Left cardiac atrium (tissue), 4 donors: ENCODE measurements at regions of chr1 and their contacts with region 1.

Region 1: GRCh38 chr1:110690709-110691365 is 16.1 kb upstream of the KCNA3 start:
- DNase-seq: no peak
- ATAC-seq: no peak

Region 2: GRCh38 chr1:110188035-110188618 is 502.7 kb before region 1 on chr1:
- intact Hi-C with region 1: no loop called
- DNase-seq: no peak
- ATAC-seq: peak; percentile 76 to 85

Region 3: DNA sequence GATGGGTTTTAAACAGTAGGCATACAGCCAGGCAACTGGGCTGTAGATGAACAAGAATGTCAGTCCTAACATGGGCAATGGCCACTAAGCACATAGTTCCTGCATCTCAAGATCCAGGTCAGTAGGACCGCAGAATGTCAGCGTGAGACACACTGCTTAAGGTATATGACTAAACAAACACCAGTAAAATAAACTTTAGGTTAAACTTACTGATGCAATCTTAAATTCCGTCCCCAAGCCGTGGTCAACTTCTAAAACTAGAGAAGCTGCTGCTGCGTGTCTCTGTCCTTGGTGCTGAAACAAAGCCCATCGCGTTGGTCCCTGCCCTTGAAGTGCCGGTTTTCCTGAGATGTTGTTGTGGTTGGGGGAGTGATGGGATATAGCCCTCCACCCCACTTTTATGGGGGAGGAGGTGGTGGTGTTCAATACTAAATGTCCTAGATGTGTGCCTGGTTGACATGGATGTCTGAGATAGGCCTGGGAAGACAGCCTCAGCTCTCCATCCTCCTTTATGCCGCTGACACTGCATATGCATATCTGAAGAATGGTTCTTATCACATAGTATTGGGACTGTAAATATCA is 55.8 kb after region 1 on chr1:
- intact Hi-C with region 1: loop called in 1 of 2 experiments (anchors 10 kb)
- DNase-seq: peak; percentile 49
- ATAC-seq: no peak